GM23248 (cell line): ENCODE measurements at regions of chr6 and their contacts with region 1.

Region 1: GRCh38 chr6:146905181-146905704 is 299.0 kb upstream of the STXBP5 start:
- DNase-seq: peak; percentile 85
- H3K4me3 ChIP-seq: no peak overlapping the region
- H3K27ac ChIP-seq: no peak overlapping the region
- H3K4me1 ChIP-seq: peaks cover 16% of the 10 kb centered on the region
- H3K27me3 ChIP-seq: no peaks in the 10 kb centered on the region

Region 2: DNA sequence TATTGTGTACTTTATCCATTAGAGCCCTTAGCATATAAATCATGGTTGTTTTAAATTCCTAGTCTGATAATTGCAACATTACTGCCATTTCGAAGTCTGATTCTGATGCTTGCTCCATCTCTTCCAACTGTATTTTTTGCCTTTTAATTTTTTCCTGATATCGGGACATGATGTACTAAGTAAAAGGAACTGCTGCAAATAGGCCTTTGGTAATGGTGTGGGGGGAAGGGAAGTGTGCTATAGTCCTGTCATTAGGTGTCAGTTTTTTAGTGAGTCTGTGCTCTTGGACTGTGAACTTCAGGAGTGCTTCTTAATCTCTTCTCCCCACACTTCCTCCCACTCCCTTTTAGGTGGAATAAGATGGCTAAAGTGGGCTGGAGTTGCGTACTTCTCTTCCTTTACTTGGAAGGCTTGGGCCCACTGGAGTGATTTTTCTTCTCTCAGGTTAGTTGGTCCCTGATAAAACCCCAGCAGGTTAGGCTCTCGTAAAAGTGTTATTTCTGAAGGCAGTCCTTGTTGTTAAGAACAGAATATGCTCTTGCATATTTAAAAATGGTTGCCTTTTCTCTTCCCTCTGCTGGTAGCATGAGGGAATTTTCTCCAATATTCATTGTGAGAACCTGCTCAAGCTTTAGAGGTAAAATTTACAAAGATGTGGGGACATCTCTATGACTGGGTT is 317.1 kb after region 1 on chr6:
- in situ Hi-C with region 1: loop called (anchors 10 kb)
- DNase-seq: peak; percentile 58
- H3K4me3 ChIP-seq: no peak overlapping the region
- H3K27ac ChIP-seq: 0 out of 2 replicates have a peak overlapping the region, but pooled peaks have one; percentile 3
- H3K4me1 ChIP-seq: 0 out of 2 replicates have a peak, but pooled peaks cover 3% of the 10 kb centered on the region
- H3K27me3 ChIP-seq: no peaks in the 10 kb centered on the region